Caco-2 (cell line): ENCODE measurements at regions of chr3 and their contacts with region 1.

Region 1: DNA sequence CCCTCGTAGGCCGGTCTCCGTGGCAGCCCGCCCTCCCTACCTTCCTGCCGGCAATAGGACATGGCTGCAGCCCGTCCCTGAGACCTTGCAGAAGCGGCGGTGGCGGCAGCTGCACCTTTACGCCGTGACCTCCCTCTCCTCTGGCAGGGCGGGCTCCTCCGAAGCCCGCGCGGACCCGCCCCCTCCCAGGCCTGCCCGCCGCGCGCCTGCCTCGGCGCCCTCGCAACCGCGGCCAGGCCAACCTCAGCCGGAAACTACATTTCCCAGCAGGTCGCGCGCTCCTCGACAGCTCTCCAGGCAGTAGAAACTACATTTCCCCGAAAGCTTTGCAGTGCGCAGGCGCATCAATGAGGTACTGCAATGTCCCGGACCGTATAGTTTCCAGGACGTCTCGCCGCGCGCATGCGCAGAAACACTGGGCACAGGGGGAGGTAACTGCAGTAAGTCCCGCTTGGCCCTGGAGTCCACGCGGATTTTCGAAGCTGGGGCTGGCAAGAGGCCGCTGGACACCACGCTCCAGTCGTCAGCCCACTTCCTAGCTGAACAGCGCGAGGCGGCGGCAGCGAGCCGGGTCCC is at the starts of genes CHCHD4 and TMEM43:
- DNase-seq: peak; percentile 97 to 99
- H3K4me3 ChIP-seq: peak within 1 kb of the TSS; percentile 95
- H3K4me3 Mint-ChIP-seq: peak within 1 kb of the TSS; percentile 91
- H3K27ac Mint-ChIP-seq: peak within 1 kb of the TSS; percentile 94
- H3K4me1 ChIP-seq: peaks cover 12% of the 10 kb centered on the region; the same call in 1 of the 2 replicates
- H3K4me1 Mint-ChIP-seq: peaks cover 18% of the 10 kb centered on the region
- H3K27me3 ChIP-seq: no peaks in the 10 kb centered on the region
- H3K27me3 Mint-ChIP-seq: no peaks in the 10 kb centered on the region
- CTCF ChIP-seq: no peak
- total RNA-seq, gene CHCHD4: 15.3 and 15.9 TPM in 2 replicates
- total RNA-seq, gene TMEM43: 33.0 and 35.2 TPM in 2 replicates

Region 2: DNA sequence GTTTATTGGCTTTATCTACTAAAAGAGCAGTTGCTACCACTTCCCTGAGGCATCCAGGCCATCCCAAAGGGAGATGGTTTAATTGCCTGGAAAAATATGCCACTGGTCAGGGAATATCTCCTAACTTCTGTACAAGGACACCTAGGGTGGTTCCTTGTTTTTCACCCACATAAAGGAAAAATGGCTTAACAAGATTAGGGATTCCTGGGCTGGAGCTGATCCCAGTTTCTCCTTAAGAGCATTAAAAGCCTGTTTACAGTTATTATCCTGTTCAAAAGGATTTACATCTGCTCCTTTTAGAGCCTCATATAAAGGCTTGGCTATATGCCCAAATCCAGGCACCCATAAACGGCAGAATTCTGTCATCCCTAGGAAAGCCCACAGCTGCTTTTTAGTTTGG is 174.7 kb before region 1 on chr3:
- CTCF ChIA-PET with region 1: interaction called, 3 read pairs
- POLR2A ChIA-PET with region 1: no interaction called
- intact Hi-C with region 1: loop called (anchors 1 kb)
- DNase-seq: no peak
- H3K4me3 ChIP-seq: no peak overlapping the region
- H3K4me3 Mint-ChIP-seq: no peak overlapping the region
- H3K27ac Mint-ChIP-seq: no peak overlapping the region
- H3K4me1 ChIP-seq: peaks cover 30% of the 10 kb centered on the region
- H3K4me1 Mint-ChIP-seq: peaks cover 11% of the 10 kb centered on the region
- H3K27me3 ChIP-seq: no peaks in the 10 kb centered on the region
- H3K27me3 Mint-ChIP-seq: no peaks in the 10 kb centered on the region
- CTCF ChIP-seq: no peak

Region 3: GRCh38 chr3:14113965-14114635 is 10.6 kb before region 1 on chr3:
- CTCF ChIA-PET with region 1: interaction called, 11 read pairs
- POLR2A ChIA-PET with region 1: interaction called, 4 read pairs
- intact Hi-C with region 1: no loop called
- DNase-seq: peak; percentile 62 to 66
- H3K4me3 ChIP-seq: no peak overlapping the region
- H3K4me3 Mint-ChIP-seq: no peak overlapping the region
- H3K27ac Mint-ChIP-seq: no peak overlapping the region
- H3K4me1 ChIP-seq: peaks cover 8% of the 10 kb centered on the region; the same call in 1 of the 2 replicates
- H3K4me1 Mint-ChIP-seq: no peaks in the 10 kb centered on the region
- H3K27me3 ChIP-seq: no peaks in the 10 kb centered on the region
- H3K27me3 Mint-ChIP-seq: no peaks in the 10 kb centered on the region
- CTCF ChIP-seq: peak; percentile 42 to 68

Region 4: DNA sequence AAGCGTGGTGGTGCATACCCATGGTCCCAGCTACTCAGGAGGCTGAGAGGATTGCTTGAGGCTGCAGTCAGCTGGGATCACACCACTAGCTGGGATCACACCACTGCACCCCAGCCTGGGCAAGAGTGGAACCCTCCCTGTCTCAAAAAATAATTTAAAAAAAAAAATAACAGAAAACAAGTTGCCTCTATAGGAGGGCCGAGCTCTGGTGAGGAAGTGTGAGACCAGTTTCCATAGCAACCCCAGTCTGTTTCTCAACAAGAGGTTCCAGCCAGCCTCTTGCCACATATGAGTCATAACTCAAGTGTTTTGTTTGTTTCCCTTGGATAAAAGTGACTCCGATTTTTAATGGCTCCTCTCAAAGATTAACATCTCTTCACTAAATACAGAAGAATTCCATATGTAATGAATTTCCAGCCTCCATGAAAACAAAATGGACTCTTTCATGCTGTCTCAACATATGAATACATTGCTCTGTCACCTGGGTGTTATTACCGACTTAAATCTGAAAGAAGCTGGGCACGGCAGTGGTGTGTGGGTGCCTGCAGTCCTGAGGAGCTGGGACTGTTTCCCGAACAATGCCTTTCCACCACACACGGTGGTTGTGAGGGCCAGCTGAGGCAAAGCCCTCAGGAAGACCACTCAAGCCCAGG is 19.8 kb after region 1 on chr3:
- CTCF ChIA-PET with region 1: no interaction called
- POLR2A ChIA-PET with region 1: interaction called, 7 read pairs
- intact Hi-C with region 1: loop called (anchors 1 kb)
- DNase-seq: peak; percentile 77 to 85
- H3K4me3 ChIP-seq: no peak overlapping the region
- H3K4me3 Mint-ChIP-seq: peak overlapping the region; percentile 47
- H3K27ac Mint-ChIP-seq: peak overlapping the region; percentile 93
- H3K4me1 ChIP-seq: peaks cover 26% of the 10 kb centered on the region
- H3K4me1 Mint-ChIP-seq: peaks cover 14% of the 10 kb centered on the region
- H3K27me3 ChIP-seq: no peaks in the 10 kb centered on the region
- H3K27me3 Mint-ChIP-seq: no peaks in the 10 kb centered on the region
- CTCF ChIP-seq: no peak

Region 5: GRCh38 chr3:14329116-14329830 is 204.6 kb after region 1 on chr3:
- CTCF ChIA-PET with region 1: no interaction called
- POLR2A ChIA-PET with region 1: no interaction called
- intact Hi-C with region 1: no loop called
- DNase-seq: no peak
- H3K4me3 ChIP-seq: no peak overlapping the region
- H3K4me3 Mint-ChIP-seq: no peak overlapping the region
- H3K27ac Mint-ChIP-seq: peak overlapping the region; percentile 76
- H3K4me1 ChIP-seq: peaks cover 28% of the 10 kb centered on the region
- H3K4me1 Mint-ChIP-seq: peaks cover 33% of the 10 kb centered on the region
- H3K27me3 ChIP-seq: no peaks in the 10 kb centered on the region
- H3K27me3 Mint-ChIP-seq: no peaks in the 10 kb centered on the region
- CTCF ChIP-seq: no peak

Region 6: DNA sequence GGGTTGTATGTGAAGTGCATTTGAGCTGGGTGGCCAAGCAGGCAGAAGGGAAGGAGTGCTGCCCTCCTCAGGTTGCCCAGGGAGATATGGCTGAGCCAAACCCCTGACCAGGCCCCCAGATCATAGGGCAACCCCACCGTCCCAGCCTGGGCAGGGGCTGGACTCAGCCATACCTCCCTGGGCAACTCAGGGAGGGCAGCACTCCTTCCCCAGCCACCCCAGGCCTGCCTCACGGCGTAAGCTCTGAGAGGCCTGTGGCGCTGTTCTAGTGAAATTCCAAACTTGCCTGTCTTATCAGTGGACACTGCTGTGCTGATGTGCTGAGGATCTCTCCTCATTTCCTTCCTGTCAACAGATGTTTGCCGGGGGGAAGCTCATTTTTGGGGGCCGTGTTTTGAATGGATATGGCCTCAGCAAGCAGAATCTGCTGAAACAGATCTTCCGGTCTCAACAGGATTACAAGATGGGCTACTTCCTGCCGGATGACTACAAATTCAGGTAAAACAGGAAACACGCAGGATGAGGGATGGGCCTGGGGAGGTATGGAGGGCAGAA is 636.5 kb after region 1 on chr3:
- CTCF ChIA-PET with region 1: no interaction called
- POLR2A ChIA-PET with region 1: no interaction called
- intact Hi-C with region 1: no loop called
- DNase-seq: no peak
- H3K4me3 ChIP-seq: no peak overlapping the region
- H3K4me3 Mint-ChIP-seq: no peak overlapping the region
- H3K27ac Mint-ChIP-seq: no peak overlapping the region
- H3K4me1 ChIP-seq: no peaks in the 10 kb centered on the region
- H3K4me1 Mint-ChIP-seq: no peaks in the 10 kb centered on the region
- H3K27me3 ChIP-seq: no peaks in the 10 kb centered on the region; the same call in 1 of the 2 replicates
- H3K27me3 Mint-ChIP-seq: peaks cover 4% of the 10 kb centered on the region
- CTCF ChIP-seq: no peak